ENCODE measurements at regions of chr1 and their contacts with region 1.

Region 1: GRCh38 chr1:181479137-181479745 is 4.1 kb upstream of the CACNA1E start:
- DNase-seq: peak; percentile 24 to 64
- ATAC-seq: peak; percentile 86 to 96 (median 90)
- H3K4me3 ChIP-seq: no peak overlapping the region
- H3K27ac ChIP-seq: no peak overlapping the region
- H3K4me1 ChIP-seq: peaks cover 3% of the 10 kb centered on the region
- H3K27me3 ChIP-seq: peaks cover 0 to 37% (median 14%) of the 10 kb centered on the region in 3 donors
- CTCF ChIP-seq: peak; percentile 73

Region 2: DNA sequence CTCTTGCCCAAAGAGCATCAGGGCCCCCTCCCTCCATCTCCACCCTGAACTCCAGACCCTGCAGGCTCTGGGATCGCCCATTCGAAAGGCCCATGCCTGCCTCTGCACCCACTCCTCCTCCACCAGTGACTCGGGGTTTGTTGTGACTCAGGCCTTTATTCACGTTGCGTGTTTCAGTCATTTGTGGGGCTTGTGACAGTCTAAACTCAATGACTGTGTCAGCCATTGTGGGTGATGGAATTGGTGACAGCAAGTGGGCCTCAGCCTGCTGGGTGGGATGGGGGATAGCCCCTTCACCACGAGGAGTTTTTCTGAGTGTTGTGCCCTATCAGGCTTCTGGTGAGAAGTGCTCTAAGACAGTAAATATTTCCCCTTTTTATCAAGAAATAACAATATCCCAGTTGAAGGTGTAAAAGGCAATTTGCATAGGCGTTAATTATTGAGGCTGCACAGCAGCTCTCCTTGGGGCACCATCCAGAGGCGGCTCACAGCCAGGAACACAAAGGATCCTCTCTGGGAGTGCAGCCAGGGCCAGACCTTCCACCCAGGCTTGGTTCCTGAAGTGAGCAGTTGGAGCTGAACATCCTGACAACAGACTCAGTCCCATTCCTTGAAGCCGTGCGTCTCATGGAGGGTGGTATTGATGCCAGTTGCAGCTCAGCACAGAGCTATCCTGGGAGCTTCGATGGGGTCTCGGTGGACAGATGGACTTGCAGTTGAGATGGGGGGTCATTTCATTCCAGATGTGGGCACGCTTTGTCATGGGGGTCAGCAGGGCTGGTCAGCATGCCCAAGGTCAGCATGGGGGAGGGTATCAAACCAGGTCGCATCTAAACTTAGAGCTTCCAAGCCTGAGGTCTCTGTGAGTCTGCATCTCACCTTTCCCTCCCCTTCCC is 131.5 kb before region 1 on chr1:
- intact Hi-C with region 1: no loop called
- DNase-seq: no peak
- ATAC-seq: no peak
- H3K4me3 ChIP-seq: no peak overlapping the region
- H3K27ac ChIP-seq: no peak overlapping the region
- H3K4me1 ChIP-seq: no peaks in the 10 kb centered on the region
- H3K27me3 ChIP-seq: no peaks in the 10 kb centered on the region
- CTCF ChIP-seq: no peak

Region 3: GRCh38 chr1:181676269-181676668 is 197.0 kb after region 1 on chr1:
- intact Hi-C with region 1: loop called (anchors 1 to 2 kb)
- DNase-seq: no peak
- ATAC-seq: peak in 3 of 4 donors; percentile 61 to 80 (median 65)
- H3K4me3 ChIP-seq: no peak overlapping the region
- H3K27ac ChIP-seq: no peak overlapping the region
- H3K4me1 ChIP-seq: no peaks in the 10 kb centered on the region
- H3K27me3 ChIP-seq: peaks cover 0 to 8% (median 1%) of the 10 kb centered on the region in 3 donors
- CTCF ChIP-seq: peak; percentile 51

Region 4: GRCh38 chr1:181936768-181937581 is 457.7 kb after region 1 on chr1:
- intact Hi-C with region 1: loop called in 1 of 2 experiments (anchors 5 kb)
- DNase-seq: no peak
- ATAC-seq: peak in 2 of 4 donors; percentile 42 to 57
- H3K4me3 ChIP-seq: no peak overlapping the region
- H3K27ac ChIP-seq: no peak overlapping the region
- H3K4me1 ChIP-seq: no peaks in the 10 kb centered on the region
- H3K27me3 ChIP-seq: no peaks in the 10 kb centered on the region
- CTCF ChIP-seq: peak; percentile 28

Region 5: GRCh38 chr1:182069028-182069466 is 589.8 kb after region 1 on chr1:
- intact Hi-C with region 1: loop called in 1 of 2 experiments (anchors 10 kb)
- DNase-seq: peak; percentile 51 to 77
- ATAC-seq: peak; percentile 79 to 96 (median 90)
- H3K4me3 ChIP-seq: no peak overlapping the region
- H3K27ac ChIP-seq: no peak overlapping the region
- H3K4me1 ChIP-seq: no peaks in the 10 kb centered on the region
- H3K27me3 ChIP-seq: no peaks in the 10 kb centered on the region
- CTCF ChIP-seq: peak; percentile 67